ENCODE measurements at regions of chr3 and their contacts with region 1.

Region 1: DNA sequence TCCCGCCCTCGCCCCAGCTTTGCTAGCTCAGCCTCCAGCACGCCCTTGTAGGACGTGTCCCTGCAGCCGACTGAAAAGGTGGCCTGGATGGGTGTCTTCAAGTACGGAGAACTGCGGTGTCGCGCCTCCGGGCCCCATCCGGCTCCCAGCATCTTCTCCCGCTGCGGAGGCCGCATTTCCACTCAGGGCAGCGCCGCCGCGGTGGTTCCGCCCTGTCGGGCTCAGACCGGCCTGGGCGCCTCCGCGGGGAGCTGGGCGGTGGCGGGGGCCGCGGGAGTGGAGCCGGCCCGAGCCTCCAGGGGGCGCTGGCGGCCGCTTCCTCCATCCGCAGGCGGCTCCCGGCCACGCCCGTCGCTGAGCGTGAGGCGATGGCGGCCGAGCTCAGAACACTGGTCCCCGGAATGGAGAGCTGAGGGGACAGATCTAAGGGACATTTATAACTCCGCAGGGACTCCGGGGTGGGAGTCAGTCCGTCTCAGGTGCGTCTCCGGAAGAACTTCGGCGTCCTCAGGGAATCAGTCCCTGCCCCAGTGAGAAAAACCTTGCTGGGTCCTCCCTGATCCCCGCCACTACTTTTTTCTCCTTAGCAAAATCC is 13.6 kb upstream of the SMCO1 start:
- DNase-seq: peak; percentile 26
- ATAC-seq: peak; percentile 97
- H3K4me3 ChIP-seq: peak overlapping the region; percentile 44
- H3K27ac ChIP-seq: peak overlapping the region; percentile 39
- H3K4me1 ChIP-seq: 0 out of 2 replicates have a peak, but pooled peaks cover 2% of the 10 kb centered on the region
- H3K27me3 ChIP-seq: no peaks in the 10 kb centered on the region; the same call in 1 of the 2 replicates
- CTCF ChIP-seq: peak; percentile 71
- POLR2A ChIP-seq: no peak
- RAD21 ChIP-seq: peak; percentile 53

Region 2: DNA sequence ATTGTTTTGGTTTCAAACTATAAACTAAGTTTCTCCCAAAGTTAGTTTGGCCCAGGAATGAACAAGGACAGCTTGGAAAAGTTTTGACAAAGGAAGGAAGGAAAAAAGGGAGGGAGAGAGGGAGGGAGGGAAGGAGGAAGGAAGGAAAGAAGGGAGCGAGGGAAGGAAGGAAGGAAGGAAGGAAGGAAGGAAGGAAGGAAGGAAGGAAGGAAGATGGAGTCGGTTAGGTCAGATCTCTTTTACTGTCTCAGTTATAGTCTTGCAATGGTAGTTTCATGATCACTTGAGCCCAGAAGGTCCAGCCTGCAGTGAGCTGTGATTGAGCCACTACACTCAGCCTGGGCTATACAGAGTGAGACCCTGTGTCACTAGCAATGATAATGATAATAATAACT is 84.2 kb before region 1 on chr3:
- CTCF ChIA-PET with region 1: no interaction called
- POLR2A ChIA-PET with region 1: no interaction called
- dilution Hi-C with region 1: no loop called
- in situ Hi-C with region 1: no loop called
- intact Hi-C with region 1: no loop called
- DNase-seq: no peak
- ATAC-seq: no peak
- H3K4me3 ChIP-seq: no peak overlapping the region
- H3K27ac ChIP-seq: no peak overlapping the region
- H3K4me1 ChIP-seq: no peaks in the 10 kb centered on the region; the same call in 1 of the 2 replicates
- H3K27me3 ChIP-seq: no peaks in the 10 kb centered on the region
- CTCF ChIP-seq: no peak
- POLR2A ChIP-seq: no peak
- RAD21 ChIP-seq: no peak

Region 3: GRCh38 chr3:196568246-196569002 is 39.7 kb after region 1 on chr3 and contains the starts of genes FBXO45 and WDR53:
- CTCF ChIA-PET with region 1: no interaction called
- POLR2A ChIA-PET with region 1: no interaction called
- dilution Hi-C with region 1: no loop called
- in situ Hi-C with region 1: no loop called
- intact Hi-C with region 1: loop called (anchors 1 kb)
- DNase-seq: peak; percentile 93
- ATAC-seq: peak; percentile 97
- H3K4me3 ChIP-seq: peak within 1 kb of the TSS; percentile 83
- H3K27ac ChIP-seq: peak within 1 kb of the TSS; percentile 81
- H3K4me1 ChIP-seq: peaks cover 4% of the 10 kb centered on the region; the same call in 1 of the 2 replicates
- H3K27me3 ChIP-seq: no peaks in the 10 kb centered on the region
- CTCF ChIP-seq: no peak
- POLR2A ChIP-seq: peak; percentile 55; the same call in 1 of the 2 replicates
- RAD21 ChIP-seq: no peak
- total RNA-seq, gene FBXO45: 5.0 and 11.7 TPM in 2 replicates
- total RNA-seq, gene WDR53: 5.7 and 6.4 TPM in 2 replicates

Region 4: DNA sequence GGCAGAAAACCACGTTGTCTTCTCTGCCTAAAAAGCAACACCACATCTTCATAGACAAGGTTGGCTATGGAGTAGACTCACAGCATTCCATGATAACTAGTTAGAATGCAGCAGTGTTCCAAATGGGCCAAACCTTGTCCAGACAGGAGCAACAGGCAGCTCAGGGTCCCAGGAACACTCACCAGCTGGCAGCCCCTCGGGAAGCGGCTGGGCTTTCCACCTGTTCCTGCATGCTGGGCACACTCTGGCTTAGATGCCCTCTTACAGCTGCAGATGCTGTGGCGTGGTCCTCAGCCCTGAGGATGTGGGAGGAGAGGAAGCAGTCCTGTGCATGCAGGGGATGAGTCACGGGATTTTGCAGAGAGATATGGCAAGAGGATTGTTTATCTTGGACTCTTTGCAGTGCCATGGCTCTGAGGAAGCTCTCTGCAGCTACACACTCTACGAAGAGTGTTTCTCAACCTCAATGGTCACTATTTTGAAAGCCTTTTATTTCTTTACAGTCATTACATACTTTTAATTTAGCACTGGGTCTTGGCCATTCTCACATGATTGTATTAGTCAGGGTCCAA is 122.1 kb after region 1 on chr3:
- CTCF ChIA-PET with region 1: no interaction called
- POLR2A ChIA-PET with region 1: no interaction called
- dilution Hi-C with region 1: no loop called
- in situ Hi-C with region 1: no loop called
- intact Hi-C with region 1: no loop called
- DNase-seq: peak; percentile 98
- ATAC-seq: peak; percentile 99
- H3K4me3 ChIP-seq: no peak overlapping the region
- H3K27ac ChIP-seq: no peak overlapping the region
- H3K4me1 ChIP-seq: peaks cover 2% of the 10 kb centered on the region
- H3K27me3 ChIP-seq: peaks cover 4% of the 10 kb centered on the region; the same call in 1 of the 2 replicates
- CTCF ChIP-seq: no peak
- POLR2A ChIP-seq: no peak
- RAD21 ChIP-seq: no peak

Region 5: GRCh38 chr3:196684548-196685407 is 156.0 kb after region 1 on chr3:
- CTCF ChIA-PET with region 1: no interaction called
- POLR2A ChIA-PET with region 1: no interaction called
- dilution Hi-C with region 1: no loop called
- in situ Hi-C with region 1: no loop called
- intact Hi-C with region 1: loop called (anchors 1 kb)
- DNase-seq: peak; percentile 47
- ATAC-seq: peak; percentile 76
- H3K4me3 ChIP-seq: no peak overlapping the region
- H3K27ac ChIP-seq: no peak overlapping the region
- H3K4me1 ChIP-seq: peaks cover 4% of the 10 kb centered on the region; the same call in 1 of the 2 replicates
- H3K27me3 ChIP-seq: peaks cover 8% of the 10 kb centered on the region
- CTCF ChIP-seq: peak; percentile 88
- POLR2A ChIP-seq: no peak
- RAD21 ChIP-seq: peak; percentile 88